Mammary epithelial cell (primary cell): ENCODE measurements at regions of chr7 and their contacts with region 1.

Region 1: DNA sequence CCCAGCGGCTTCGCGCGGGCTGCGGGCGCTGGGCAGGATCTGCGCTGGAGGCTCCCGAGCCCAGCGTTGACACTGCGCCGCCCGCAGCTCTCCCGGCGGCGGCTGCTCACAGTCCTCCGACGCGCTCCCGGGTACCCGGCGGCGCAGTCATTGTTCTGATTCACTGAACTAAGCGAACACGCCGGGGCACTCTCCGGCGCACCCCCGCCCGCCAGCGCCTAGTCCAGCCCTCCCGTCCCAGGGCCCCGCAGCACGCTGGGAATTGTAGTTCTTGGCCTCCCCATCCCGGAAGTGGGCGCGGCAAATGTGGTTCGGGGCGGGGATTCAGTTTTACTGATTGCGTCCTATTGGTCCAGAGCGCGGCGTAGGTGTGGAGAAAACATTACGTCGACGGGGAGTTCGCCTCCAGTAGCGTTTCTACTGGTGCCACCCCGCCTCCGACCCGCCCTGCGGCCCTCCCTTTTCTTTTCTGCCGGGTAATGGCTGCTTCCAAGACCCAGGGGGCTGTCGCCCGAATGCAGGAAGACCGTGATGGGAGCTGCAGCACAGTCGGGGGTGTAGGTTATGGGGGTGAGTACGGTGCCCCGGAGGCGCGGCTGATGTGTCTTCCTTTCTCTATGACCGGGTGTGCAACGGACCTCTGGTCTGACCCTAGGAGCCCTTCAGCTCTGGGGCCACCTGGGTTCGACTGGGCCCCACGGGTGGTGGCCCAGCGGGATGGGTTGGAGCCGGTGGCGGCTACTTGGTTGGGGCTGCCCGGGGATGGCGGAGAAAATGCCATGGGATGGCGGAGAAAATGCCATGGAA is at the starts of genes DOCK4 and ZNF277:
- DNase-seq: peak; percentile 100
- H3K4me3 ChIP-seq: peak within 1 kb of the TSS; percentile 71 to 97 (median 94)
- H3K27ac ChIP-seq: peak within 1 kb of the TSS; percentile 77
- H3K4me1 ChIP-seq: peaks cover 16% of the 10 kb centered on the region
- H3K27me3 ChIP-seq: no peaks in the 10 kb centered on the region
- CTCF ChIP-seq: peak in 1 of 2 donors; percentile 1
- total RNA-seq, gene DOCK4: 7.5 to 22.2 TPM
- total RNA-seq, gene ZNF277: 18.9 to 36.0 TPM

Region 2: DNA sequence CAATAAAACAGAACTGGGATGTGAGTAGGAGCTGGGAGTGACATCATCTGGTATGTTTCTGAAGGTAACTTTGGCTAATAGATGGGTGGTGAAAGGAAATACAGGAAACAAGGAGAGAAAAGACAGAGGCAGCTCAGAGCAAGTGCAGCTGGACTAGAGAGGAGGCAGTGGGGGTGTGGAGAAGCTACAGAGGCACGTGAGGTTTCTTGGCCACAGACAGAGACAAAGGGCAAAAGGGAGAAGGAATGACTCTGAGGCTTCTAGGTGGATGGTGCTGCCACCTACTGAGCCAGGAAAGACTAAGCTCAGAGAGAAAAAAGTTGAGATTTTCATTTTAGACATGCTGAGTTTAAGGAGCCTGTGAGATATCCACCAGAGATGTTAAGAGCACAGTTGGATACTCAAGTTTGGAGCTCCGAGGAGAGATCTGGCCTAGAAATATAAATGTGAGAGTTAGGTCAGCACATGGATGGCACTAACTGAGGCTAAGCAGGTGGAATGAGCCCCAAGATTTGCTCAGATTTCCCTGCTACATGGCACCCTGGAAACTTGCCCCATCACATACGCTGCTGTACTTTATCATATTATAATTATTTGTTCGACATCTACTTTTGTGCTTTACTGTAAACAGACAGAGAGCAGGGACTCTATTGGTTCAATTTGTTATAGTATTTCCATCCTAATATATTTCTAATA is 351.1 kb before region 1 on chr7:
- CTCF ChIA-PET with region 1: no interaction called
- dilution Hi-C with region 1: no loop called
- in situ Hi-C with region 1: no loop called
- intact Hi-C with region 1: loop called (anchors 5 kb)
- DNase-seq: peak; percentile 48
- H3K4me3 ChIP-seq: no peak overlapping the region
- H3K27ac ChIP-seq: no peak overlapping the region
- H3K4me1 ChIP-seq: no peaks in the 10 kb centered on the region
- H3K27me3 ChIP-seq: no peaks in the 10 kb centered on the region
- CTCF ChIP-seq: peak; percentile 68 to 86

Region 3: DNA sequence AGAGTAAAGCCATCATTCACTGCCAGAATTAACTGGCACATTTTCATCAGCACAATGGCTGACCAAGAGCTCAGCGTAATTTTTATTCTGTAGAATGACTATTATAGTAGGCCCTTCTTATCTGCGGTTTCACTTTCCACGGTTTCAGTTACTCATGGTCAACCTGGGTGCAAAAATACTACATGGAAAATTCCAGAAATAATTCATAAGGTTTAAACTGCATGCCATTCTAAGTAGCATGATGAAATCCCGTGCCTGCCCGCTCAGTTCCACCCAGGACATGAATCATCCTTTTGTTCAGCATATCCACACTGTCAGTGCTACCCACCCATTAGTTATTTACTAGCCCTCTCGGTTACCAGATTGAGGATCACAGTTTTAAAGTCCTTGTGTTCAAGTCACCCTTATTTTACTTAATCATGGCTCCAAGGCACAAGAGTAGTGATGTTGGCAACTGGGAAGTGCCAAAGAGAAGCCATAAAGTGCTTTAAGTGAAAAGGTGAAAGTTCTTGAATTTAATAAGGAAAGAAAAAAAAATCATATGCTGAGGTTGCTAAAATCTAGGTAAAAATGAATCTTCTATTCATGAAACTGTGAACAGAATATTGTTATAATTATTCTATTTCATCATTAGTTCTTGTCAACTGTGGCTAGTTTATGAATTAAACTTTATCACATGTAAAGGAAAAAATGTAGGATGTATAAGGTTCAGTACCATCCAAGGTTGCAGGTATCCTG is 205.2 kb before region 1 on chr7:
- CTCF ChIA-PET with region 1: no interaction called
- dilution Hi-C with region 1: no loop called
- in situ Hi-C with region 1: no loop called
- intact Hi-C with region 1: loop called (anchors 2 kb)
- DNase-seq: peak; percentile 92
- H3K4me3 ChIP-seq: peak overlapping the region in 2 of 3 experiments; percentile 10 to 16
- H3K27ac ChIP-seq: peak overlapping the region; percentile 91
- H3K4me1 ChIP-seq: peaks cover 15% of the 10 kb centered on the region
- H3K27me3 ChIP-seq: no peaks in the 10 kb centered on the region
- CTCF ChIP-seq: no peak

Region 4: GRCh38 chr7:112112822-112113255 is 93.6 kb before region 1 on chr7:
- CTCF ChIA-PET with region 1: no interaction called
- dilution Hi-C with region 1: no loop called
- in situ Hi-C with region 1: no loop called
- intact Hi-C with region 1: loop called (anchors 5 kb)
- DNase-seq: peak; percentile 78
- H3K4me3 ChIP-seq: no peak overlapping the region
- H3K27ac ChIP-seq: peak overlapping the region; percentile 11
- H3K4me1 ChIP-seq: peaks cover 8% of the 10 kb centered on the region
- H3K27me3 ChIP-seq: no peaks in the 10 kb centered on the region
- CTCF ChIP-seq: no peak

Region 5: DNA sequence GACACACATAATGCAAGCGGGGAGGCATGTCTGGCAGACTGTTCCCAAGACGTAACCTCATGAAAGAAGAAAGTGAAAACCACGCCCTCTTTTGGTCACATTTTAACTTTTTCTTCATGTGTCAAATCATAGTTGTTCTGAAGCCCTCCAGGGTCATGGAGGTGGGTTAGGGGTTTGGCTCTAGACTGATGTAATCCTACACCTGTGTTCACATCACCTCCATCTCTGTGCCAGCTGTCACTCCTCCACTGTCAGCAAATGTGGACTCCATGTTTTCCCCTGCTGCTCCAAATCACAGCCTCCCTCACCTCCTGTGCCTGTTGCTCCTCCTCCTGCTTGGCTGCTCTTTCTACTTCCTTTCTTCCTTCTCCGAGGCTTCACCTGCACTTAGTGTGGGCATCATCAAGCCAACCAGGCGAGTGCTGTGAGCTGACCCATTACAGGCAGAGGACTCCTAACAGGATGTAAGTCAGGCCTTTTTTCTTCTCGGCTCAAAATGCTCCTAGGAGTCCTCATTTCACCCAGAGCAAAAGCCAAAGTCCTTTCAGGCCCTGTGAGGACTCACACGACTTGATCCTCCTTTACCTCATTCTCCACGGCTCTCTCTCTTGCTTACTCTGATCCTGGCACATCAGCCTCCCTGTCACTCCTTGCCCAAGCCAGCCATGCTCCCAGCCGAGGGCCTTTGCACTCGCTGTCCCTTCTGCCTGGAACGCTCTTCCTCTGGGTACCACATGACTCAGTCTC is 177.4 kb after region 1 on chr7:
- CTCF ChIA-PET with region 1: no interaction called
- dilution Hi-C with region 1: no loop called
- in situ Hi-C with region 1: no loop called
- intact Hi-C with region 1: loop called (anchors 10 kb)
- DNase-seq: no peak
- H3K4me3 ChIP-seq: no peak overlapping the region
- H3K27ac ChIP-seq: no peak overlapping the region
- H3K4me1 ChIP-seq: no peaks in the 10 kb centered on the region
- H3K27me3 ChIP-seq: no peaks in the 10 kb centered on the region
- CTCF ChIP-seq: peak in 1 of 2 donors; percentile 1

Region 6: GRCh38 chr7:112422842-112423496 is 216.5 kb after region 1 on chr7:
- CTCF ChIA-PET with region 1: no interaction called
- dilution Hi-C with region 1: no loop called
- in situ Hi-C with region 1: loop called in 1 of 2 experiments (anchors 25 kb)
- intact Hi-C with region 1: no loop called
- DNase-seq: peak; percentile 90
- H3K4me3 ChIP-seq: no peak overlapping the region
- H3K27ac ChIP-seq: peak overlapping the region; percentile 26
- H3K4me1 ChIP-seq: peaks cover 41% of the 10 kb centered on the region
- H3K27me3 ChIP-seq: no peaks in the 10 kb centered on the region
- CTCF ChIP-seq: no peak

Region 7: GRCh38 chr7:113209449-113210203 is 1003.2 kb after region 1 on chr7:
- CTCF ChIA-PET with region 1: no interaction called
- dilution Hi-C with region 1: no loop called
- in situ Hi-C with region 1: no loop called
- intact Hi-C with region 1: no loop called
- DNase-seq: peak; percentile 13
- H3K4me3 ChIP-seq: no peak overlapping the region
- H3K27ac ChIP-seq: peak overlapping the region; percentile 44
- H3K4me1 ChIP-seq: peaks cover 5% of the 10 kb centered on the region
- H3K27me3 ChIP-seq: no peaks in the 10 kb centered on the region
- CTCF ChIP-seq: no peak